ENCODE measurements at regions of chr14 and their contacts with region 1.

Region 1: DNA sequence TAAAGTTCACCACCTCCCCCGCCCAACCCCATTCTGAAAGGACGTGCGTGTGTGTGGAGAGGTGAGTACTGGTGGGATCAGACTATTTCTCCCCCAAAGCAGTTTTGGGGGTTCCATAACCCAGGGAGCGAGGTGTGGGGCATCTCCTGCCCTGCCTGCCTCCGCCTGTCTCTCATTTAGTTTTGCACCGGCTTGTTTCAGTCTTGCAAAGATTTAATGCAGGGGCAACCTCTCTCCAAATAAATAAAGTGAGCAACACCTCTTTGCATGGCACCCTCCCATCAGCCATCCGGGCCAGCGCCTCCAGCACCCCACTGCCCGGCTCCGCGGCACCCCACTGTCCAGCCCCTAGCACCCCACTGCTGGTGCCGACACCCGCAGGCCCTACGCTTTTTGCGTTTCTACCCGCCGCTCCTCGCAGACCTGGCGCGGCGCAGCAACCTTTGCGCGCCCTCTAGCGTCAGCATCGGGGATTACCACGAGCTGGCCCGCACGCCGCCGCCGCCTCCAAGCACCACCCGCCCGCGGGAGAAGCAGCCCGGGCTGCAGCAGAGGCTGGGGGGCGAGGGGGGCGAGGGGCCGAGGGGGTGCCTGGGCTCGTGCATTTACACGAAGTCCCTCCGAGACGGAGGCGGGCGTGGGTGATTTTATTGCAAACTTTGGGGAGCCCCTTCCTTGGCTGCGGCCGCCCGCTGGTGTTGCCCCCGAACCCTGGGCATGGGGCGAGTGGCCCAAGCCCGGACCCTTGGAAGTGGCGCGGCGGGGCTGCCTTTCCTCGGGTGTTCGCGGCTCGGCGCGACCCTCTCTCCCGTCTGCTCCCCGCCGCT is 55.8 kb upstream of the VRK1 start:
- DNase-seq: peak; percentile 33 to 71 (median 62)
- H3K4me3 ChIP-seq: peak overlapping the region in 2 of 4 donors; percentile 15 to 57
- H3K27ac ChIP-seq: no peak overlapping the region
- H3K4me1 ChIP-seq: peaks cover 0 to 9% of the 10 kb centered on the region in 2 donors
- H3K27me3 ChIP-seq: peaks cover 13% of the 10 kb centered on the region
- CTCF ChIP-seq: peak; percentile 61 to 90 (median 75)
- POLR2A ChIP-seq: no peak

Region 2: DNA sequence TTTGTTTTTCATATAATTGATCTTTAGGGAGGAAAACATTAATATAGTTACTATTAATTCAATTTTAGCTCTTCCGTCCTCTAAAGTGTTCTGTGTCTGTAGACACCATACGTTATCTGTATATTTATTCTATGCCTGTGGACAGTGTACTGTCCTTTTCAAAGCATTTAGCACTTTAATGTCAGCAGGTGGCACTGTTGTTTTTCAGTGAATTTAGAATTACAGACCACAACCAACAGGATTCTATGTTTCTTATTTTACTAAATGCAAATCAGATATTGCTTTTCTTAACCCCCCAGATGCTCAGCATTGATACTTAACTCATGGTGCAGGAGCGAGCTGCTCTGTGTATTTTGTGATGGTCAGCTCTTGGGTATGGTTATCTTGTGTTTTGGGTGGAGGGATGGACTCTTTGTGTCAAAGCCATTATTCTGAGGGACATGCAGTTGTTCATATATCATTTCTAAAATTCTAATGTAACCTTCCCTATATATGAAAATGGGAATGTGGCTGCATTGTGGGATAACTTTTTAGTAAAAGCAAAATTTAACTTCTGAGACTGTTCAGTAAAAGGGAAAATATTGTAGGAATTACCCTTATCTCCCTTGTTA is 174.0 kb before region 1 on chr14:
- intact Hi-C with region 1: loop called (anchors 5 to 10 kb)
- DNase-seq: no peak
- H3K4me3 ChIP-seq: no peak overlapping the region
- H3K27ac ChIP-seq: no peak overlapping the region
- H3K4me1 ChIP-seq: no peaks in the 10 kb centered on the region
- H3K27me3 ChIP-seq: no peaks in the 10 kb centered on the region
- CTCF ChIP-seq: peak; percentile 32 to 60 (median 45)
- POLR2A ChIP-seq: no peak

Region 3: GRCh38 chr14:96574633-96575632 is 166.4 kb before region 1 on chr14:
- intact Hi-C with region 1: loop called in 1 of 2 experiments (anchors 10 kb)
- DNase-seq: peak in 5 of 7 donors; percentile 32 to 63 (median 43)
- H3K4me3 ChIP-seq: no peak overlapping the region
- H3K27ac ChIP-seq: no peak overlapping the region
- H3K4me1 ChIP-seq: peaks cover 10 to 16% of the 10 kb centered on the region in 2 donors
- H3K27me3 ChIP-seq: no peaks in the 10 kb centered on the region
- CTCF ChIP-seq: no peak
- POLR2A ChIP-seq: no peak

Region 4: DNA sequence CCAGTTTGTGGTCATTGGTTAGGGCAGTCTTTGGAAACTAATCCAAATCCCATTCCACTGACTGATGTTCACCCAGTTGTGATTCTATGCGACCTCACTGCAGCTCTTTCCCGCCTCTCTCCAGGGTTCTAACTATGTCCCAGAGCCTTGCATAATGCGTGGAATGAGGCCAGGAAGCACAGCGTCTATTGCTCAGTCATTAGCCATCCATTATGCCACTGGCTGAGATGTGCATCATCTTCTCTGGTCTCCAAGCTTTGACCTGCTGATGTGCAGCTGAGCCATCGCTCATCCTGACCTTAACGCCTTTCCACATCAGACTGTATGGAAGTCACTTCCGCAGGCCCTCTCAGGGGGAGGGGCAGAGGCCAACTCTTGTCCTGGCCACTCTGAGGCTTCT is 59.5 kb before region 1 on chr14:
- intact Hi-C with region 1: no loop called
- DNase-seq: no peak
- H3K4me3 ChIP-seq: no peak overlapping the region
- H3K27ac ChIP-seq: no peak overlapping the region
- H3K4me1 ChIP-seq: no peaks in the 10 kb centered on the region
- H3K27me3 ChIP-seq: no peaks in the 10 kb centered on the region
- CTCF ChIP-seq: no peak
- POLR2A ChIP-seq: no peak

Measured in adrenal gland (tissue), 19 donors.